ENCODE measurements at regions of chr14 and their contacts with region 1.

Region 1: DNA sequence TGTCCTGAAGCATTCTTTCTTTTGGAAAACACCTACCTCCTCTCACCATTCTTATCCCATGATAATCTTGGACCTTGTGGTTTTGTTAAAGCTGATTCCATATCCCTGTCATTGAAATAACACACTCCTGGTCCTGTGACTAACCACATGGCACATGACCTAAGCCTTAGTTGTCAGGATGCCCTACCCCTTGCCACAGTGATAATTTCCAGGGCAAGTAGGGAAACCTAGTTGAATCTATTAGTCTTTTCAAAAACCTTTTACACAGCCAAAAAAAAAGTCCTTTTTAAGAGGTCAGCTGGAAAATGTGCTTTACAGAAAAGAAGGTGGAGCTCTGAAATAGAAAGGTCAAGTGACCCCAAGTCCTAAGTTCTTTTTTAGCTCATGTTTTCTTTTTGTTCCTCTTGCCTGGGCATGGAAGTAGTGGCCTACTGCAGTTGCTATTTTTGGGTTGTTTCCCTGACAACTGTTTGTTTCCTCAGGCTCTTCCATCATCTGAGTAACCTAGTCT is 608.4 kb downstream of the LRFN5 start:
- DNase-seq: peak; percentile 77
- H3K4me3 Mint-ChIP-seq: no peak overlapping the region
- H3K27ac Mint-ChIP-seq: peak overlapping the region; percentile 82
- H3K4me1 Mint-ChIP-seq: peaks cover 14% of the 10 kb centered on the region
- H3K27me3 Mint-ChIP-seq: no peaks in the 10 kb centered on the region
- CTCF ChIP-seq: no peak

Region 2: DNA sequence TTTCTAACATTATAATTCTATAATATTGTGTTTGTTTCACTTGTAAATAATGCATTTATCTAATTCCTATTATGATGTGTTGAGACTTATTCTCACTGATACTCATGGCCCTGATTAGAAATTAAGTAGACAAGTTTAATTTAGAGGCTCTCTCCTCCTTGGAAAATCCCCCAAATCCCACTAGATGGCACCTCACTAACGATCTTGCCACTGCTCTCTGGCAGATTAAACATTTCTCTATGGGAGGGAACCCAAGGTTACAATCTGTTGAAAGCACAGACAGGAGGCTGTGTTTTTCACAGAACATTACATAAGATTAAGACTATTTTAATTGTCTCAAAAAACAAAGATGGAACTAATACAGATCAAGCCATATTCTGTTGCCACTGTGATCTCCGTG is 289.6 kb before region 1 on chr14:
- CTCF ChIA-PET with region 1: interaction called, 4 read pairs
- POLR2A ChIA-PET with region 1: no interaction called
- intact Hi-C with region 1: loop called (anchors 10 kb)
- DNase-seq: peak; percentile 43
- H3K4me3 Mint-ChIP-seq: no peak overlapping the region
- H3K27ac Mint-ChIP-seq: no peak overlapping the region
- H3K4me1 Mint-ChIP-seq: no peaks in the 10 kb centered on the region
- H3K27me3 Mint-ChIP-seq: peaks cover 36% of the 10 kb centered on the region
- CTCF ChIP-seq: peak; percentile 35

Region 3: DNA sequence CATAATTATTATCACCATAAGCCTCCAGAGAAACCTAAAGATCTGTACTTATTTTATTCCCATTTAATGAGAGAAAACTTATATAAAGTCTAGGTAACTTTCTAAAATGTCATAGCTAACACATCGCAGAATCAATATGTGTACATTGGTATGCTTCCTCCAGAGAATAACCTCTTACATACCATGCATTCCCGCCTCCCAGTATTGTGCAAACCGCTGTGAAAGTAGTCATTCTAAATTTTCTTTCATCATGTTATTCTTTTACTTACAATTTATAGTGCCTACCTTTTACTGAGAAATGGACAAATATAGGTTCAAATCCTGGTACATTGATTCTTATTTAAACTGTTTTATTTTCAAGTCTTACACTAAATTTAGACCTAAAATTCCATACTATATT is 145.0 kb before region 1 on chr14:
- CTCF ChIA-PET with region 1: no interaction called
- POLR2A ChIA-PET with region 1: no interaction called
- intact Hi-C with region 1: no loop called
- DNase-seq: peak; percentile 5
- H3K4me3 Mint-ChIP-seq: no peak overlapping the region
- H3K27ac Mint-ChIP-seq: no peak overlapping the region
- H3K4me1 Mint-ChIP-seq: no peaks in the 10 kb centered on the region
- H3K27me3 Mint-ChIP-seq: no peaks in the 10 kb centered on the region
- CTCF ChIP-seq: no peak

Region 4: GRCh38 chr14:42095155-42095554 is 119.9 kb before region 1 on chr14:
- CTCF ChIA-PET with region 1: no interaction called
- POLR2A ChIA-PET with region 1: no interaction called
- intact Hi-C with region 1: no loop called
- DNase-seq: peak; percentile 18
- H3K4me3 Mint-ChIP-seq: no peak overlapping the region
- H3K27ac Mint-ChIP-seq: no peak overlapping the region
- H3K4me1 Mint-ChIP-seq: no peaks in the 10 kb centered on the region
- H3K27me3 Mint-ChIP-seq: no peaks in the 10 kb centered on the region
- CTCF ChIP-seq: no peak

Region 5: DNA sequence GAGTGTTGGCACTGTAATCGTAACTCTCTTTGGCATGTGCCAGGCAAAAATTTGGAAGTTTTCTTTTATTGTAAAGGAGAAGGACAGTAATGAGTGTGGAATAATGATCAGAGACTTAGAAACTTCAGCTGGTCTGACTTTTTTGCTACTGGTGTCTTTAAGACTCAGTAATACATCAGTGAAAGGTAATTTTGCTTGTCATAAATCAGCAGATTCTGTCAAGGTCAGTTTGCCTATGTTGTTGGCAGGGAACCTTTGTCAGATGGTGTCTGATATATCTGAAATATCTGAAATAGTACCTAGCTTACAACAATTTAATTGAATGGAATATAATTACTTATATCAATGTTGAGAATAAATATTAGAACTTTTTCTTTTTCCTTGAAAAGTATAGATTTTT is 91.5 kb before region 1 on chr14:
- CTCF ChIA-PET with region 1: no interaction called
- POLR2A ChIA-PET with region 1: no interaction called
- intact Hi-C with region 1: loop called (anchors 5 kb)
- DNase-seq: no peak
- H3K4me3 Mint-ChIP-seq: no peak overlapping the region
- H3K27ac Mint-ChIP-seq: no peak overlapping the region
- H3K4me1 Mint-ChIP-seq: no peaks in the 10 kb centered on the region
- H3K27me3 Mint-ChIP-seq: no peaks in the 10 kb centered on the region
- CTCF ChIP-seq: no peak

Measured in MCF 10A (cell line).